B cell (primary cell): ENCODE measurements at regions of chr20 and their contacts with region 1.

Region 1: DNA sequence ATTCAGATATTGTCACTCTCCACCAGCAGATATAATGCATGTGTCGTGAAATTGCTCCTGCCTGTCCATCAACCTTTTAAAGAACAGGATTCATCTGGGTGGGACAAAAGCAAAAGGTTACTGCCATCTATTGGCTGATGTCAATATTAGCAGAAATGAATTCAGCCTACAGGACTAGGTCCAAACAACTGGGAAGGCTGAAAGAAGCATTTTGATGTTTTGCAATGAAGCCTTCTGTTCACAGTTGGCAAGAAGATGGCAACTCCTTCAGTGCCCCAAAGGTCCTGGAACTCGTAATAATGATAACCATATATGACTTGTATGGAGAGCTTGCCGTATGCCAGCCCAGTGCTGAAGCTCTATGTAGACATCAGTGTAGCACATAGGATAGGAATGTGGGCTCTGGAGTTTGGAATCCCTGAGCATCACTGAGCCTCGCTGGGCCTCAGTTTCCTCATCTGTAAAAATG is 7.5 kb downstream of the BCAS1 start:
- DNase-seq: peak; percentile 56
- ATAC-seq: no peak
- H3K4me3 ChIP-seq: no peak overlapping the region
- H3K4me3 Mint-ChIP-seq: no peak overlapping the region
- H3K27ac ChIP-seq: no peak overlapping the region
- H3K27ac Mint-ChIP-seq: no peak overlapping the region
- H3K4me1 ChIP-seq: peaks cover 0 to 26% of the 10 kb centered on the region in 2 donors
- H3K4me1 Mint-ChIP-seq: peaks cover 31% of the 10 kb centered on the region
- H3K27me3 ChIP-seq: no peaks in the 10 kb centered on the region
- H3K27me3 Mint-ChIP-seq: no peaks in the 10 kb centered on the region
- CTCF ChIP-seq: peak; percentile 73

Region 2: DNA sequence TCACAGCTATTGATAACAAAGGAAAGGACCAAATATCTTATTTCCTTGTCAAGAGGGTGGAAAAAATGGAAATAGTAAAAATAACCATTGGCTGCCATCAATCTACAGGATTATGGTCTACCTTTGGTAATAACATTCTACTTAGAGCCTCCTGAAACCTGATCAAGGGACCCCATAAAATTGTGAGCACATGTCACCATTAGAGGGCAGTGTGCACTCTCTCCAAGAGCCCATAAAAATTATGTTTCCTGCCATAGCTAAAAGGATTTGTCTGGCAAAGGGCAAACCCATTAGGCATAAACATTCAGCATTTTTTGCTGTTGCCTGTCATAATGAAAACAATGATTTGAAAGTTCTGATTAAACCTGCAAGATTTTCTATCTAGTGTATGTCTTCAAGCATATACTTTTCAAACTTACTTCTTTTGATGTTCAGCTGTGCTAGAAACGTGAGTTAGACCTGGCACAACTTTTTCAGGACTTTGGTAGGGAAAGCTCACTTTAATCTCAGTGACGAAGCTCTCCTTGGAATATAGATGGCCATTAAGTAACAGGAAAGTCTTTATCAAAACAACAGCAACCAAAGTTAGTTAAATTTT is 1750.6 kb before region 1 on chr20:
- CTCF ChIA-PET with region 1: interaction called, 17 read pairs
- POLR2A ChIA-PET with region 1: no interaction called
- intact Hi-C with region 1: no loop called
- DNase-seq: peak; percentile 60
- ATAC-seq: no peak
- H3K4me3 ChIP-seq: no peak overlapping the region
- H3K4me3 Mint-ChIP-seq: no peak overlapping the region
- H3K27ac ChIP-seq: no peak overlapping the region
- H3K27ac Mint-ChIP-seq: no peak overlapping the region
- H3K4me1 ChIP-seq: no peaks in the 10 kb centered on the region
- H3K4me1 Mint-ChIP-seq: no peaks in the 10 kb centered on the region
- H3K27me3 ChIP-seq: no peaks in the 10 kb centered on the region
- H3K27me3 Mint-ChIP-seq: peaks cover 35% of the 10 kb centered on the region
- CTCF ChIP-seq: peak; percentile 81

Region 3: GRCh38 chr20:53413186-53413631 is 649.6 kb before region 1 on chr20:
- CTCF ChIA-PET with region 1: interaction called, 34 read pairs
- POLR2A ChIA-PET with region 1: no interaction called
- intact Hi-C with region 1: loop called (anchors 1 kb)
- DNase-seq: peak; percentile 72
- ATAC-seq: peak; percentile 56
- H3K4me3 ChIP-seq: peak overlapping the region in 1 of 5 experiments; percentile 10
- H3K4me3 Mint-ChIP-seq: peak overlapping the region; percentile 56
- H3K27ac ChIP-seq: no peak overlapping the region
- H3K27ac Mint-ChIP-seq: peak overlapping the region; percentile 0
- H3K4me1 ChIP-seq: peaks cover 0 to 8% of the 10 kb centered on the region in 2 donors
- H3K4me1 Mint-ChIP-seq: peaks cover 5% of the 10 kb centered on the region
- H3K27me3 ChIP-seq: peaks cover 0 to 4% (median 0%) of the 10 kb centered on the region in 4 experiments
- H3K27me3 Mint-ChIP-seq: no peaks in the 10 kb centered on the region
- CTCF ChIP-seq: peak; percentile 62

Region 4: GRCh38 chr20:53947501-53948195 is 115.2 kb before region 1 on chr20:
- CTCF ChIA-PET with region 1: interaction called, 7 read pairs
- POLR2A ChIA-PET with region 1: interaction called, 10 read pairs
- intact Hi-C with region 1: loop called (anchors 5 kb)
- DNase-seq: no peak
- ATAC-seq: no peak
- H3K4me3 ChIP-seq: no peak overlapping the region
- H3K4me3 Mint-ChIP-seq: no peak overlapping the region
- H3K27ac ChIP-seq: no peak overlapping the region
- H3K27ac Mint-ChIP-seq: no peak overlapping the region
- H3K4me1 ChIP-seq: peaks cover 26 to 34% of the 10 kb centered on the region in 2 donors
- H3K4me1 Mint-ChIP-seq: peaks cover 34% of the 10 kb centered on the region
- H3K27me3 ChIP-seq: no peaks in the 10 kb centered on the region
- H3K27me3 Mint-ChIP-seq: no peaks in the 10 kb centered on the region
- CTCF ChIP-seq: no peak

Region 5: GRCh38 chr20:54017809-54018208 is 45.0 kb before region 1 on chr20:
- CTCF ChIA-PET with region 1: interaction called, 6 read pairs
- POLR2A ChIA-PET with region 1: no interaction called
- intact Hi-C with region 1: loop called (anchors 2 kb)
- DNase-seq: peak; percentile 71
- ATAC-seq: peak; percentile 70
- H3K4me3 ChIP-seq: peak overlapping the region in 2 of 5 experiments; percentile 6 to 12
- H3K4me3 Mint-ChIP-seq: peak overlapping the region; percentile 67
- H3K27ac ChIP-seq: peak overlapping the region; percentile 22 to 50
- H3K27ac Mint-ChIP-seq: peak overlapping the region; percentile 86
- H3K4me1 ChIP-seq: peaks cover 17 to 25% of the 10 kb centered on the region in 2 donors
- H3K4me1 Mint-ChIP-seq: peaks cover 22% of the 10 kb centered on the region
- H3K27me3 ChIP-seq: no peaks in the 10 kb centered on the region
- H3K27me3 Mint-ChIP-seq: no peaks in the 10 kb centered on the region
- CTCF ChIP-seq: no peak

Region 6: GRCh38 chr20:55273149-55273548 is 1210.3 kb after region 1 on chr20:
- CTCF ChIA-PET with region 1: no interaction called
- POLR2A ChIA-PET with region 1: no interaction called
- intact Hi-C with region 1: no loop called
- DNase-seq: no peak
- ATAC-seq: no peak
- H3K4me3 ChIP-seq: no peak overlapping the region
- H3K4me3 Mint-ChIP-seq: no peak overlapping the region
- H3K27ac ChIP-seq: no peak overlapping the region
- H3K27ac Mint-ChIP-seq: no peak overlapping the region
- H3K4me1 ChIP-seq: no peaks in the 10 kb centered on the region
- H3K4me1 Mint-ChIP-seq: no peaks in the 10 kb centered on the region
- H3K27me3 ChIP-seq: no peaks in the 10 kb centered on the region
- H3K27me3 Mint-ChIP-seq: no peaks in the 10 kb centered on the region
- CTCF ChIP-seq: no peak